ENCODE measurements at regions of chr1 and their contacts with region 1.

Region 1: DNA sequence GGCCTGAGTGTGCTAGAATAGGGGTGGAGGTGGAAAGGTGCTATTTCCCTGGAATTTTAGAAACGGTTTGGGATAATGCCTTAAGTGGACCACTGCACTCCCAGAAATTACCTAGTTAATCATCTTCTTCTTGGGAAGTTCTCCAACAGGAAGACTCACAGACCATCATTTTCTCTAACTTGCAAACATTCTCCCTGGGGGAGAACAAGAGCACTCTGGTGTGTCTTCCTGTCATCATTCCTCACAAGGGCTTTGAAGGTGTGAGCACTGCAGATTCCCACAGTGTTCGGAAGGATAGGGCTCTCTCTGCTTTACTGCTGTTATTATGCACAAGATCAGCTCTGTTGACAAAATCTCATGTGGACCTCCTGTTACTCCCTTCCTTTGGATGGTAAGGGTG is 54.9 kb upstream of the TSPAN2 start:
- DNase-seq: no peak
- H3K4me3 ChIP-seq: no peak overlapping the region
- H3K27ac ChIP-seq: no peak overlapping the region
- H3K4me1 ChIP-seq: no peaks in the 10 kb centered on the region
- H3K27me3 ChIP-seq: no peaks in the 10 kb centered on the region
- CTCF ChIP-seq: no peak

Region 2: DNA sequence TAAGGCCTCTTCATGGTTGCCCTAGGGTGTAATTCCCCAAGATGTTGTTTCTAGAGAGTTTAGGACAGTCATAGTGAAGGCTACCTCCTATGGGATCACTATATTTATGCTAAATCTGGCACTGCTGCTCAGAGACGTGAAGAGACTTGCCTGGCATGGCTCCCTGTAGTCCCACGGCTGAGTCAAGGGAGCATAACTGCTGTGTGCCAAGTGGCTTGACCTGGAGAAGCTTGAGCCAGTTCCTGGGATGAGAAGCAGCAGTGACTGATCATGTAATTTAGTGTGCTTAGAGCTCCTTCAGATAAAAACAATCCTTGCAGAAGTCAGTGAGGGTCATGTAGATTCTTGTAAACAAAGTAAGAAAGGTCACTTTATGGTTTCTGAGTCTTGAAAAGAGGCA is 14.0 kb after region 1 on chr1:
- CTCF ChIA-PET with region 1: interaction called, 4 read pairs
- dilution Hi-C with region 1: no loop called
- in situ Hi-C with region 1: no loop called
- intact Hi-C with region 1: loop called (anchors 2 kb)
- DNase-seq: peak; percentile 95
- H3K4me3 ChIP-seq: no peak overlapping the region
- H3K27ac ChIP-seq: no peak overlapping the region
- H3K4me1 ChIP-seq: peaks cover 20% of the 10 kb centered on the region
- H3K27me3 ChIP-seq: no peaks in the 10 kb centered on the region
- CTCF ChIP-seq: no peak

Region 3: GRCh38 chr1:115409097-115410015 is 265.2 kb after region 1 on chr1:
- CTCF ChIA-PET with region 1: no interaction called
- dilution Hi-C with region 1: no loop called
- in situ Hi-C with region 1: no loop called
- intact Hi-C with region 1: no loop called
- DNase-seq: no peak
- H3K4me3 ChIP-seq: no peak overlapping the region
- H3K27ac ChIP-seq: no peak overlapping the region
- H3K4me1 ChIP-seq: peaks cover 6% of the 10 kb centered on the region
- H3K27me3 ChIP-seq: no peaks in the 10 kb centered on the region
- CTCF ChIP-seq: no peak

Measured in mammary epithelial cell (primary cell).